AG04450 (cell line): ENCODE measurements at regions of chr1 and their contacts with region 1.

Region 1: GRCh38 chr1:212665241-212666115 is 34.2 kb downstream of the BATF3 start:
- DNase-seq: peak; percentile 41
- H3K4me3 ChIP-seq: peak overlapping the region; percentile 82
- H3K27ac ChIP-seq: peak overlapping the region; percentile 21
- H3K27me3 ChIP-seq: no peaks in the 10 kb centered on the region
- CTCF ChIP-seq: peak; percentile 92

Region 2: GRCh38 chr1:212477014-212477679 is 188.3 kb before region 1 on chr1:
- CTCF ChIA-PET with region 1: interaction called, 21 read pairs
- POLR2A ChIA-PET with region 1: no interaction called
- DNase-seq: peak; percentile 71
- H3K4me3 ChIP-seq: no peak overlapping the region
- H3K27ac ChIP-seq: no peak overlapping the region
- H3K27me3 ChIP-seq: peaks cover 12% of the 10 kb centered on the region
- CTCF ChIP-seq: peak; percentile 97

Region 3: GRCh38 chr1:212641956-212642355 is 23.5 kb before region 1 on chr1:
- CTCF ChIA-PET with region 1: interaction called, 40 read pairs
- POLR2A ChIA-PET with region 1: no interaction called
- DNase-seq: no peak
- H3K4me3 ChIP-seq: no peak overlapping the region
- H3K27ac ChIP-seq: no peak overlapping the region
- H3K27me3 ChIP-seq: peaks cover 11% of the 10 kb centered on the region
- CTCF ChIP-seq: no peak

Region 4: GRCh38 chr1:212777151-212777550 is 111.7 kb after region 1 on chr1:
- CTCF ChIA-PET with region 1: interaction called, 75 read pairs
- POLR2A ChIA-PET with region 1: no interaction called
- DNase-seq: no peak
- H3K4me3 ChIP-seq: no peak overlapping the region
- H3K27ac ChIP-seq: no peak overlapping the region
- H3K27me3 ChIP-seq: no peaks in the 10 kb centered on the region
- CTCF ChIP-seq: no peak

Region 5: DNA sequence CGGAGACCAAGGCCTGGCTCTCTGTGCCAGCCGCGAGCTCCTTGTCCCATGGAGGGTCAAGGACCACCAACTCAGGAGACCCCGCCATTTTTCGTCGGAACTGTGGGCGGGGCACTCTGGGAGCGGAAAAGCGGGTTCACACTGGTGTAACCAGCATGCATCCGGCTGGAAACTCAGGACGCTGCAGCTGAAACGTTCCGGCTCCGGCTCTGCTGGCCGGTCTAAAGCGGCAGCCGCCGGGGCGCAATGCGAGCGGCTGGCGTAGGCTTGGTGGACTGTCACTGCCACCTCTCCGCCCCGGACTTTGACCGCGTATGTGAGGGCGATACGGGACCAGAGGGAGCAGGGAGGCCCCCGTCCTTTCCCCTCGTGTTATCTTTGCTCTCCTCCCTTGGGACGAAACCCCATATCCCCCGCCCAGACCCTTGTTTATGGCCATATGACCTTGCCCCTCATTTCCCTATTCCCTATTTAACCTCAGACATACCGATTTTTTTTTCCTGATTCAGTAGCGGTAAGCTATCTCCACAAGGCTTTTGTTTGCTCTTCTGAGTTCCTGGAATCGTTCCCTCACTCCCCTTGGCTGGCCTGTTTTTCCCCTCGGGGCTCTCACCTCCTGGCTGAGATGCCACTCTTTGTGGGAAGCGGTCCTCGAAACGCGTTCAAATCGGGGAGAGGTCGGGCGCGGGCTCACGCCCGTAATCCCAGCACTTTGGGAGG is 126.4 kb after region 1 on chr1 and contains the starts of genes NSL1 and TATDN3:
- CTCF ChIA-PET with region 1: interaction called, 11 read pairs
- POLR2A ChIA-PET with region 1: interaction called, 4 read pairs
- DNase-seq: peak; percentile 85
- H3K4me3 ChIP-seq: peak within 1 kb of the TSS; percentile 98
- H3K27ac ChIP-seq: peak within 1 kb of the TSS; percentile 84
- H3K27me3 ChIP-seq: no peaks in the 10 kb centered on the region
- CTCF ChIP-seq: no peak
- polyA plus RNA-seq, gene NSL1: 26.7 and 33.8 TPM in 2 replicates
- polyA plus RNA-seq, gene TATDN3: 12.4 and 16.3 TPM in 2 replicates

Region 6: GRCh38 chr1:213419369-213420030 is 754.0 kb after region 1 on chr1:
- CTCF ChIA-PET with region 1: no interaction called
- POLR2A ChIA-PET with region 1: no interaction called
- DNase-seq: no peak
- H3K4me3 ChIP-seq: no peak overlapping the region
- H3K27ac ChIP-seq: no peak overlapping the region
- H3K27me3 ChIP-seq: no peaks in the 10 kb centered on the region
- CTCF ChIP-seq: no peak